BJ (cell line): ENCODE measurements at regions of chrX and their contacts with region 1.

Region 1: DNA sequence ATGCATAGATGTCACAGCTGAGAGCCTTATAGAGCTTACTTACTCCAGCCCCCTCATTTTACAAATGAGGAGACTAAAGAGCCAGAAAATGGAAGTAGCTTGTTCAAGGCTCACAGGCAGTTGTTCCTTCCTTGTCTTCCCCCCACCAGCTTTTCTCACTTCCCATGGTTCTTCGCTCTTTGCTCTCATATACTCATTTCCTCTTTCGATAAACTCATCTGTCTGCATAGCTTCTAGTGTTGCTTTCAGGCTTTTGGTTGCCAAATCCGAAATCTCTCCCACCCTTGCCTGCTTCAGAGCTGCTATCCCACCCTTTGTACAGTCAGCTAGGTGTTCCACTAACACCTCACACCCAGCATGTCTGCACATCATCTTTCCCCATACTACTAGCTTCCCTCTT is 25.0 kb upstream of the GJB1 start:
- DNase-seq: no peak
- H3K4me3 ChIP-seq: no peak overlapping the region
- H3K27me3 ChIP-seq: no peaks in the 10 kb centered on the region
- CTCF ChIP-seq: no peak

Region 2: GRCh38 chrX:71212535-71212934 is 14.5 kb after region 1 on chrX:
- CTCF ChIA-PET with region 1: no interaction called
- POLR2A ChIA-PET with region 1: interaction called, 14 read pairs
- DNase-seq: no peak
- H3K4me3 ChIP-seq: no peak overlapping the region
- H3K27me3 ChIP-seq: peaks cover 4% of the 10 kb centered on the region; the same call in 1 of the 2 replicates
- CTCF ChIP-seq: no peak

Region 3: DNA sequence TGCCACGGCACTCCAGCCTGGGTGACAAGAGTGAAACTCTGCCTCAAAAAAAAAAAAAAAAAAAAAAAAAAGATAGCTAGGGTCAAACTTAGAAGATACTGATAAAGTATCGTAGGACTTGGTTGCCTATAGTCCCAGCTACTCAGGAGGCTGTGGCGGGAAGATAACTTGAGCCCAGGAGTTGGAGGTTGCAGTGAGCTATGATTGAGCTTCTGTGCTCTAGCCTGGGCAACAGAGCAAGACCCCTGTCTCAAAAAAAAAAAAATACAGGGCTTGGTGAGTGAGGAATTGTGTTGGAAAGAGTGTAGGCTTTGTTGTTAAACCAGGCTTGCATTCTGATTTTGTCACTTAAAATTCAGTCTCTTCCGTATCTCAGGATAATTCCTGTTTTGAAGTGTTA is 174.3 kb after region 1 on chrX:
- CTCF ChIA-PET with region 1: no interaction called
- POLR2A ChIA-PET with region 1: no interaction called
- DNase-seq: no peak
- H3K4me3 ChIP-seq: no peak overlapping the region
- H3K27me3 ChIP-seq: no peaks in the 10 kb centered on the region
- CTCF ChIP-seq: no peak